Body of pancreas (tissue), 4 donors: ENCODE measurements at regions of chr12 and their contacts with region 1.

Region 1: GRCh38 chr12:124771462-124772288 is 92.0 kb downstream of the SCARB1 start:
- DNase-seq: peak; percentile 82 to 89 (median 84)
- ATAC-seq: peak; percentile 71
- H3K4me3 ChIP-seq: no peak overlapping the region
- H3K27ac ChIP-seq: no peak overlapping the region
- H3K4me1 ChIP-seq: peaks cover 10% of the 10 kb centered on the region
- H3K27me3 ChIP-seq: no peaks in the 10 kb centered on the region
- CTCF ChIP-seq: peak; percentile 84 to 98 (median 92)
- POLR2A ChIP-seq: no peak

Region 2: GRCh38 chr12:124036674-124037109 is 735.0 kb before region 1 on chr12:
- intact Hi-C with region 1: loop called (anchors 2 kb)
- DNase-seq: peak; percentile 43 to 60 (median 46)
- ATAC-seq: peak; percentile 58
- H3K4me3 ChIP-seq: no peak overlapping the region
- H3K27ac ChIP-seq: no peak overlapping the region
- H3K4me1 ChIP-seq: peaks cover 7% of the 10 kb centered on the region
- H3K27me3 ChIP-seq: no peaks in the 10 kb centered on the region
- CTCF ChIP-seq: peak; percentile 80 to 99 (median 91)
- POLR2A ChIP-seq: no peak

Region 3: GRCh38 chr12:124162151-124162989 is 609.3 kb before region 1 on chr12:
- intact Hi-C with region 1: no loop called
- DNase-seq: no peak
- ATAC-seq: no peak
- H3K4me3 ChIP-seq: no peak overlapping the region
- H3K27ac ChIP-seq: no peak overlapping the region
- H3K4me1 ChIP-seq: no peaks in the 10 kb centered on the region
- H3K27me3 ChIP-seq: no peaks in the 10 kb centered on the region
- CTCF ChIP-seq: no peak
- POLR2A ChIP-seq: no peak

Region 4: GRCh38 chr12:124359671-124360581 is 411.7 kb before region 1 on chr12:
- intact Hi-C with region 1: loop called (anchors 10 kb)
- DNase-seq: peak; percentile 95 to 98 (median 96)
- ATAC-seq: peak; percentile 85
- H3K4me3 ChIP-seq: no peak overlapping the region
- H3K27ac ChIP-seq: peak overlapping the region; percentile 80 to 85 (median 84)
- H3K4me1 ChIP-seq: peaks cover 66% of the 10 kb centered on the region
- H3K27me3 ChIP-seq: no peaks in the 10 kb centered on the region
- CTCF ChIP-seq: peak in 3 of 7 experiments; percentile 28 to 35 (median 28)
- POLR2A ChIP-seq: peak in 1 of 3 donors; percentile 11